Psoas muscle (tissue), 8 donors: ENCODE measurements at regions of chr9 and their contacts with region 1.

Region 1: GRCh38 chr9:5971740-5972139 is 43.7 kb downstream of the RANBP6 start:
- DNase-seq: no peak
- ATAC-seq: no peak
- H3K4me3 ChIP-seq: no peak overlapping the region
- H3K27ac ChIP-seq: no peak overlapping the region
- H3K4me1 ChIP-seq: peaks cover 10% of the 10 kb centered on the region
- H3K27me3 ChIP-seq: no peaks in the 10 kb centered on the region
- CTCF ChIP-seq: no peak

Region 2: GRCh38 chr9:5851445-5851844 is 120.3 kb before region 1 on chr9:
- intact Hi-C with region 1: no loop called
- DNase-seq: no peak
- ATAC-seq: peak in 1 of 4 donors; percentile 37
- H3K4me3 ChIP-seq: no peak overlapping the region
- H3K27ac ChIP-seq: no peak overlapping the region
- H3K4me1 ChIP-seq: peaks cover 10% of the 10 kb centered on the region
- H3K27me3 ChIP-seq: no peaks in the 10 kb centered on the region
- CTCF ChIP-seq: no peak

Region 3: GRCh38 chr9:5931657-5932056 is 40.1 kb before region 1 on chr9:
- intact Hi-C with region 1: loop called in 1 of 2 experiments (anchors 2 kb)
- DNase-seq: no peak
- ATAC-seq: no peak
- H3K4me3 ChIP-seq: no peak overlapping the region
- H3K27ac ChIP-seq: no peak overlapping the region
- H3K4me1 ChIP-seq: no peaks in the 10 kb centered on the region
- H3K27me3 ChIP-seq: no peaks in the 10 kb centered on the region
- CTCF ChIP-seq: no peak

Region 4: GRCh38 chr9:6230037-6230760 is 258.5 kb after region 1 on chr9:
- intact Hi-C with region 1: no loop called
- DNase-seq: no peak
- ATAC-seq: no peak
- H3K4me3 ChIP-seq: no peak overlapping the region
- H3K27ac ChIP-seq: no peak overlapping the region
- H3K4me1 ChIP-seq: no peaks in the 10 kb centered on the region
- H3K27me3 ChIP-seq: peaks cover 0 to 4% (median 3%) of the 10 kb centered on the region in 3 donors
- CTCF ChIP-seq: no peak

Region 5: DNA sequence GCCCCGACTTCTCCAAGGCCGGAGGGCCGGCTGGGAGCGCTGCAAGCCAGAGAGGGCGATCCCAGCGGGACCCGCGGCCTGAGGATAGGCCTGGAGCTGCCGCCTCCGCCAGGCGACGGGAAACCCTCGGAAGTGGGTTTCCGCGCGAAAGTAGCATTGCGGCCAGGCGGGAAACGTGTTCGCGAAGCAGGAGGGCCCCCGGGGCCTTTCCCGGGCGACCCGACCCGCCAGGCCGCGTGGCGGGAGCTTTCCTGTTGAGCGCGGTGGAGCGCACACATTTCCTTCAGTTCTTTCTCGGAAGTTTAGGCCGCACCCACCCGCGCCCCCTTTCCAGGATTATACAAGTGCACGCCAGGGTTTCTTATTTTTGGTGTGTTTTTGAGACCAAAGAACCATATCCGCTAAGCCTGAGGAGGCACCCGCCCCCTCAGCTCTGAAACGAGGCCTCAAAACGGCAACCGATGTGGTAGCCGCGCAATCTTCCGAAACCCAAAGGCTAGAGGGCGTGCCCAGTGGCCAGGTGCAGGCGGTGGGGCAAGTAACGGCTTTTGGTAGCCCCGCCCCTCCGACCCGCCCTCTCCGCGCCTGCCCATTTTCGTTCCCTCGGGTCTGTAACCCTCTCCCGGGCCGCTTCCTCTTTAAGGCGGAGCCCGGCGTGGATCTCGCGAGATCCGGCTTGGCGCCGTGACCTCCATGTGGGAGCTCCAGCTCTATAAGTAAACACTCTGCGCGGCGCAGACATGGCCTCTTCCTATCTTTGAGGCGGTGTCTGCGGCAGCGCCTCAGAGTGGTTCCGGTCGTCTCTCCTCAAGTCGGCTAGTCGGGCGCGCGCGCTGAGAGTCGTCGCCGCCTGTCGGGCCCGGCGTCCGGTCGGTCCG is 441.0 kb after region 1 on chr9 and contains the start of gene UHRF2:
- intact Hi-C with region 1: no loop called
- DNase-seq: peak; percentile 98 to 99
- ATAC-seq: peak; percentile 98
- H3K4me3 ChIP-seq: peak within 1 kb of the TSS; percentile 99
- H3K27ac ChIP-seq: peak within 1 kb of the TSS; percentile 84
- H3K4me1 ChIP-seq: peaks cover 24% of the 10 kb centered on the region
- H3K27me3 ChIP-seq: peaks cover 0 to 11% (median 0%) of the 10 kb centered on the region in 3 donors
- CTCF ChIP-seq: no peak
- total RNA-seq, gene UHRF2: 12.5 to 18.2 (median 15.2) TPM